PC-3 (cell line): ENCODE measurements at regions of chr12 and their contacts with region 1.

Region 1: DNA sequence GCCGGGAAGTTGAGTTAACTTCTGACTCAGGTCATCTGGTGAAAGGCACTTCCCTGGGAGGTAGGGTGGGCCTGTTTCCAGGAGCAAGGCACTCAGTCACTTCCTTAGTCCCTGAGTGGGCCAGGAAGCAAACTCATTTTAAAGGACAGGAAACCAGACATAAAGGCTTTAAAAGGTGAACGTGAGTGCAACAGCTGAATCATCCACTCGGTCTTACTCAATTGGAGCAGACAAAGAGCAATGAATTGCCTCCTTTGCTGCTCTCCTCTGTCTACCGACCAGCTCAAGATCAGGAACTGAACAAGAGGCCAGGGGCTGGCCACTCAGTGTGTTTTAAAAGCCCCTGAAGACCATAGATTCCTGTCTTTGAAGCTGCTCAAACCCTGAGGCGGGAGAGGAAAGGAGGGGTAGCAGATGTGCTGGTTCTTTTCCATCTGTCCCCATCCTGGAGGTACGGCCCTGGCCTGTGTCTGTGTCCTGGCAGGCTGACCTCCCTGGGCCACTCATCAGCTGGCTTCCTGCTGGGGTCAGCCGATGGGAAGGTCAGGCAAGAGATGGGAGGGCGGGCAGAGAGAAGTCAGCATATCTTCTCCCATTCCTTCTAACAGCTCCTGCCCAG is 148.9 kb downstream of the PPM1H start:
- DNase-seq: peak; percentile 98
- ATAC-seq: peak; percentile 90
- H3K4me3 ChIP-seq: no peak overlapping the region
- H3K27ac ChIP-seq: peak overlapping the region; percentile 97
- H3K4me1 ChIP-seq: peaks cover 51% of the 10 kb centered on the region
- H3K27me3 ChIP-seq: no peaks in the 10 kb centered on the region
- CTCF ChIP-seq: no peak

Region 2: GRCh38 chr12:62640910-62641448 is 145.1 kb before region 1 on chr12:
- CTCF ChIA-PET with region 1: no interaction called
- POLR2A ChIA-PET with region 1: no interaction called
- intact Hi-C with region 1: loop called (anchors 2 kb)
- DNase-seq: peak; percentile 27
- ATAC-seq: peak; percentile 67
- H3K4me3 ChIP-seq: no peak overlapping the region
- H3K27ac ChIP-seq: peak overlapping the region; percentile 68
- H3K4me1 ChIP-seq: peaks cover 16% of the 10 kb centered on the region
- H3K27me3 ChIP-seq: no peaks in the 10 kb centered on the region
- CTCF ChIP-seq: no peak

Region 3: GRCh38 chr12:62724947-62725447 is 61.1 kb before region 1 on chr12:
- CTCF ChIA-PET with region 1: no interaction called
- POLR2A ChIA-PET with region 1: interaction called, 11 read pairs
- intact Hi-C with region 1: loop called (anchors 2 kb)
- DNase-seq: peak; percentile 98
- ATAC-seq: peak; percentile 92
- H3K4me3 ChIP-seq: peak overlapping the region; percentile 26; the same call in 1 of the 2 replicates
- H3K27ac ChIP-seq: peak overlapping the region; percentile 81
- H3K4me1 ChIP-seq: peaks cover 55% of the 10 kb centered on the region
- H3K27me3 ChIP-seq: no peaks in the 10 kb centered on the region
- CTCF ChIP-seq: no peak

Region 4: GRCh38 chr12:62738105-62738504 is 47.9 kb before region 1 on chr12:
- CTCF ChIA-PET with region 1: no interaction called
- POLR2A ChIA-PET with region 1: no interaction called
- intact Hi-C with region 1: no loop called
- DNase-seq: no peak
- ATAC-seq: no peak
- H3K4me3 ChIP-seq: no peak overlapping the region
- H3K27ac ChIP-seq: no peak overlapping the region
- H3K4me1 ChIP-seq: peaks cover 25% of the 10 kb centered on the region
- H3K27me3 ChIP-seq: no peaks in the 10 kb centered on the region
- CTCF ChIP-seq: no peak

Region 5: DNA sequence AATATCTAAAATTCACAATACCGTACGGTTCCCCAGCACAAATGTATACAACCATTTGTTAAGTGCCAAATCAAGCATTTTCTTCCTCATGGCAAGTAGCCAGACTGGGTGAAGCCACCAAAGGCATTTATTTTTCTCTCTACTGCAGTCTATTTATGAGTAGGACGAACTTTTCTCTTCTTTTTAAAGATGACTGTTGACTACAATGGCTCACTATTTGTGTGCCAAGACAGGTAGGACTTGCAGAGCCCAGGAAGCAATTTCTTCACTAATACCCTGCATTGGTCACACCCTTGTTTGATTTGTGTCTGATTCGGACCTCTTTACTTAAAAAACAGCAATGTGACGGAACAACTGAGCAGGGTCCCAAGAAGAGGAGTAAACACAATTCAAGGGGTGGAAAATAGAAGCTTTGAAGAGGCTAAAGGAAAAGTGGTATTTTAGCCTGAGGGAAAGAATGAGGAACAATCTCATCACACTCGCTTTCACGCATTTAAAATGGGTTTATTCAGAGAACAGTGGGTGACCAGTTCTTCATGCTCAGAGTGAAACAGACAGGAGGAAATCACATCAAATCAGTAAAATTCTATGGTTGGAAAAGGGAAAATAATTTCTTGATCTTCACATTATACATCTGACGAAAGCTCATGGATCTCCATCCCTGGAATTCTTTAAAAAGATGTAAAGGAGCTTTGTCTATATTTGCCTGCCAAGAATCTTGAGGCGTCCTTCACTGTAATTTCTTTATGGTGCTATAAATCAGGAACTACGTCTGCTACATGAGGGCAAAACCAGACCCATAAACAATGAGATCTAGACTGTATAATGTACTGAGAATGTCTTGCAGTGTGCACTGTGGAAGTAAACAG is 34.9 kb before region 1 on chr12:
- CTCF ChIA-PET with region 1: no interaction called
- POLR2A ChIA-PET with region 1: no interaction called
- intact Hi-C with region 1: loop called (anchors 2 kb)
- DNase-seq: peak; percentile 77
- ATAC-seq: peak; percentile 74
- H3K4me3 ChIP-seq: peak overlapping the region; percentile 15; the same call in 1 of the 2 replicates
- H3K27ac ChIP-seq: peak overlapping the region; percentile 79
- H3K4me1 ChIP-seq: peaks cover 31% of the 10 kb centered on the region
- H3K27me3 ChIP-seq: no peaks in the 10 kb centered on the region
- CTCF ChIP-seq: no peak

Region 6: DNA sequence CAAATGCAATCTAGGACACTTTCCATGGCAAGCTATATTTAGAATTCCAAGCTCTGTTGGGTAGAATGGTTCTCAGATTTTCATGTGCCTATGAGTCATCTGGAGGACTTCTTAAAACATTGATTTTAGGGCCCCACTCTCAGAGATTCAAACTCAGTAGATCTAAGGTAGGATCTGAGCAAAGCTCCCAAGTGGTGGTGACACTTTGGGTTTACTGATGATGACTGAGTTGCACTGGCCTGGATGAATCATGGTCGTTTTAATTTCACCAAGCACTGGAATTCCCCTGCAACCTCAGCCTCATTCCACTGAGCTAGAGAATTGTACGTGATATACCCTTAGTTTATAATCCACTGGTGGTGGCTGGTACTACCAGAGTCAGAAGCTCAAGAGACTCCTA is 62.4 kb after region 1 on chr12:
- CTCF ChIA-PET with region 1: no interaction called
- POLR2A ChIA-PET with region 1: no interaction called
- intact Hi-C with region 1: no loop called
- DNase-seq: peak; percentile 82
- ATAC-seq: peak; percentile 93
- H3K4me3 ChIP-seq: no peak overlapping the region
- H3K27ac ChIP-seq: peak overlapping the region; percentile 56
- H3K4me1 ChIP-seq: peaks cover 15% of the 10 kb centered on the region
- H3K27me3 ChIP-seq: no peaks in the 10 kb centered on the region
- CTCF ChIP-seq: no peak